Right ventricle myocardium superior (tissue), 1 donor: ENCODE measurements at regions of chr18 and their contacts with region 1.

Region 1: GRCh38 chr18:35005963-35006577 is 35.1 kb upstream of the MAPRE2 start:
- DNase-seq: no peak
- ATAC-seq: peak; percentile 96

Region 2: GRCh38 chr18:35063875-35064690 is 58.0 kb after region 1 on chr18:
- intact Hi-C with region 1: no loop called
- DNase-seq: no peak
- ATAC-seq: peak; percentile 14

Region 3: GRCh38 chr18:35143622-35144596 is 137.8 kb after region 1 on chr18:
- intact Hi-C with region 1: loop called (anchors 2 kb)
- DNase-seq: no peak
- ATAC-seq: peak; percentile 94

Region 4: DNA sequence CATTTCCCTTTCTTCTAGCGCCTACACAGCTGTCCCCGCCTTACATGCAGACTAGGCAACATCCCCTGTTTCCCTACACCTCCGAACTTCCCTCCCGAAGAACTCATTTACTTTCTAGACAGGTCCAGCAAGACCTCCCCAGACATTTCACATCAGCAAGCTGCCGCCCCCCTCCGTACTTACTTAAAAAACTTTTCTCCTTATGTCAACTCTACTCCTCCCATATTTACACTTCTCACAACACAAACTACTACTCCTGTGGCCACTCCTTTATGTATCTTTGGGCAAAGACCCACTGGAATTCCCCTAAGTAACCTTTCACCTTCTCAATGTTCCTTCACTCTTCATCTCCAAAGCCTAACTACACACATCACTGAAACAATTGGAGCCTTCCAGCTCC is 214.4 kb after region 1 on chr18:
- intact Hi-C with region 1: loop called (anchors 5 kb)
- DNase-seq: no peak
- ATAC-seq: no peak

Region 5: GRCh38 chr18:35355140-35355618 is 349.1 kb after region 1 on chr18:
- intact Hi-C with region 1: loop called (anchors 10 kb)
- DNase-seq: peak; percentile 75
- ATAC-seq: peak; percentile 99